Activated CD8-positive, alpha-beta T cell treated with anti-CD3 and anti-CD28 coated beads, Interleukin-2, amount 10 ng/mL, durations not matched to agents 7 days and 5 days (primary cell): ENCODE measurements at regions of chr12 and their contacts with region 1.

Region 1: DNA sequence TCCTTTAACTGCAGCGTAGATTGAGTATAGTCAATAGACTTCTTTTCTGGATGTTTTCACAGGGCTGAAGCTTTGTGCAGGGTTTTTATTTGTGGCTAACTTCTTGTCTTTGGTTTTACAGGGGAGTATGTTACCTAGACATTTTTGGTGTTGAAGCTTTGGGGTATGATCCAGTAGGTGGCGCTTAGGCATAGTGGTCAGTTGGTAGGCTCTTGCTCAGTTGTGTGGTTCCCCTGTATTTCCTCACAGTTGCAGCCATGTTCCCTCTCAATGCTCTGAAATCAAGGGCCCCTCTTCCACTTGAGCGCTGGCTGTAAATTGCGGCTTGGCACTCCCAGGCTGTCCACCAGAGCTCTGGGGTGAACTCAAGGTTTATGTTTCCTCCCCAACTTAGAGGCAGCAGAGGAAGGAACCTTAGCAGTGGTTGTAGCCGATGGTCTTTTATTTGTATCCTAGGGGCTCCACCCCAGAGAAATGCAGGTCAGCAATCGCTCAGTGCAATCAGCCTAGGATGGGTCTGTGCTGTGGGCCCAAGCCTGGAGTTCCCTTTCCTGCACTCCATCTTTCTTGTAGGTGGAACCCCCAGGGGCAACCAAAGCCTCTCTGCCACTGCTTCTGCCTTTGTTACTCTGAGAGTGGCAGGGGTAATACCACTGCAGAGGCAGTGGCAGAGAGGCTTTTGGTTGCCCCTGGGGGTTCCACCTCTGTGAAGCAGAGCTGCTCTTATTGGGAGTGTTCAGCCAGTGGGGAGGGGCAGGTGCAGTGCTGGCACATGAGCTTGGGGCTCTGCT is 55.1 kb downstream of the CMAS start:
- DNase-seq: peak; percentile 57
- ATAC-seq: peak; percentile 49
- H3K4me3 Mint-ChIP-seq: no peak overlapping the region
- H3K27ac Mint-ChIP-seq: no peak overlapping the region
- H3K4me1 Mint-ChIP-seq: peaks cover 13% of the 10 kb centered on the region
- H3K27me3 Mint-ChIP-seq: peaks cover 9% of the 10 kb centered on the region

Region 2: GRCh38 chr12:21221778-21222177 is 879.4 kb before region 1 on chr12:
- CTCF ChIA-PET with region 1: no interaction called
- POLR2A ChIA-PET with region 1: no interaction called
- DNase-seq: no peak
- ATAC-seq: no peak
- H3K4me3 Mint-ChIP-seq: no peak overlapping the region
- H3K27ac Mint-ChIP-seq: no peak overlapping the region
- H3K4me1 Mint-ChIP-seq: no peaks in the 10 kb centered on the region
- H3K27me3 Mint-ChIP-seq: no peaks in the 10 kb centered on the region

Region 3: GRCh38 chr12:21989819-21990412 is 111.2 kb before region 1 on chr12:
- CTCF ChIA-PET with region 1: no interaction called
- POLR2A ChIA-PET with region 1: no interaction called
- DNase-seq: no peak
- ATAC-seq: no peak
- H3K4me3 Mint-ChIP-seq: no peak overlapping the region
- H3K27ac Mint-ChIP-seq: no peak overlapping the region
- H3K4me1 Mint-ChIP-seq: peaks cover 8% of the 10 kb centered on the region
- H3K27me3 Mint-ChIP-seq: peaks cover 9% of the 10 kb centered on the region

Region 4: DNA sequence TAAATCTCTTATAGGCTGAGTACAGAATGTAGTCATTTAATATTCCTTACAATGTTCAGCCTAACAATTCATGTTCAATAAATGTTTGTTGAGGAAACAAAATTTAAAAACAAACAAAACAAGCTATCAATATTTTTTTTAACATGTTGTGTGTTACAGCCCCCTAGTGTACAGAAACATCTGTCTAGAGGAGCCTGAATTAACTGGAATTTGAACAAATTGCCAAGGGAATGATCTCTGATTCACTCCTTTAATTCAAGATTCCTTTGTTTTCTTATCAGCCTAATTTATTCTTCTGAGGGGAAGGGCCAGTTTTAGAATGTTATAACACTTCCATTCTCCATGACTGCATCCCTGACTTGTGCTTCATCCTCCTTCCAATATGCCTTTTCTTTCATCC is 72.0 kb after region 1 on chr12:
- CTCF ChIA-PET with region 1: interaction called, 26 read pairs
- POLR2A ChIA-PET with region 1: no interaction called
- DNase-seq: no peak
- ATAC-seq: no peak
- H3K4me3 Mint-ChIP-seq: no peak overlapping the region
- H3K27ac Mint-ChIP-seq: no peak overlapping the region
- H3K4me1 Mint-ChIP-seq: no peaks in the 10 kb centered on the region
- H3K27me3 Mint-ChIP-seq: no peaks in the 10 kb centered on the region

Region 5: DNA sequence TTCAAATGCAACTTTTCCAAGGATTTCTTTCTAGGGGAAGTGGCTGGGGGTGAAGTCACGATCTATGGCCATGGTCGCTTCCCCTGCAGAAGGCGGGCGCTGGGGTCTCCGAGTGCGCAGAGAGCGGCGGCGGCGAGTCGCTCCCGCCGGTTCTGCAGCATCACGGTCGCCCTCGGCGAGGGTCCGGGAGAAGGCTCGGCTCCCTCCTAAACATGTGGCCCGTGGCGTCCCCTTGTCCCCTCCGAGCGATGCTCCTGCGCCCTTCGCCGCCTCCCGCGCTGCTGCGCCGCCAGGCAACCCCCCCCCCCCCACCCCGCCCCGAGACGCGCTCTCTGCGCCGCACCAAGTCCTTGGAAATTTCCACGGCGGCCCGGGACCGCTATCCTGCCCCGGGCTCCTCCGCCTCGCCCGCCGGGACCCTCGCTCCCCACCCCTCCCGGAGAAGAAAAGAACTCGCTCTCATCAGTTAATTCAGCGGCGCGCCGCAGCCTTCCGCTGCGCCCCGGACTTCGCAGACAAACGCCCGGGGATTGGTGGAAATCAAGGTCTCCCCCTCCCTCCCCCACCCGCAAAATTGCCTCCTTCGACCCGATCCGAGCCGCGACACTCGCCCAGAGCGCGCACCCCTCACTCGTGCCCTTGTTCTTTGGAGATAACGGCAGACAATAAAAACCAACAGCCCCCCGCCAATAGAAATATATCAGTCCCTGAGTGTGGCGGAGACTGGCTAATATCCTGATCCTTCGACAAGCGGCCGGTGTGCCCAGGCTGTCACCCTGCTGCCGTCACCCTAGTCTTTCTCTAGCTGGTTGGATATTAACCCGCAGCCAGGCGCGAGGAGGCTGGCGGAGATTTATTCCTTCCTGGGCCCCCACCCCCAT is 233.5 kb after region 1 on chr12 and contains the start of gene ST8SIA1:
- CTCF ChIA-PET with region 1: interaction called, 11 read pairs
- POLR2A ChIA-PET with region 1: no interaction called
- DNase-seq: peak; percentile 51
- ATAC-seq: peak; percentile 39
- H3K4me3 Mint-ChIP-seq: peak within 1 kb of the TSS; percentile 84
- H3K27ac Mint-ChIP-seq: peak within 1 kb of the TSS; percentile 23
- H3K4me1 Mint-ChIP-seq: peaks cover 16% of the 10 kb centered on the region
- H3K27me3 Mint-ChIP-seq: peaks cover 56% of the 10 kb centered on the region
- total RNA-seq, gene ST8SIA1: 0.29 to 0.34 TPM

Region 6: DNA sequence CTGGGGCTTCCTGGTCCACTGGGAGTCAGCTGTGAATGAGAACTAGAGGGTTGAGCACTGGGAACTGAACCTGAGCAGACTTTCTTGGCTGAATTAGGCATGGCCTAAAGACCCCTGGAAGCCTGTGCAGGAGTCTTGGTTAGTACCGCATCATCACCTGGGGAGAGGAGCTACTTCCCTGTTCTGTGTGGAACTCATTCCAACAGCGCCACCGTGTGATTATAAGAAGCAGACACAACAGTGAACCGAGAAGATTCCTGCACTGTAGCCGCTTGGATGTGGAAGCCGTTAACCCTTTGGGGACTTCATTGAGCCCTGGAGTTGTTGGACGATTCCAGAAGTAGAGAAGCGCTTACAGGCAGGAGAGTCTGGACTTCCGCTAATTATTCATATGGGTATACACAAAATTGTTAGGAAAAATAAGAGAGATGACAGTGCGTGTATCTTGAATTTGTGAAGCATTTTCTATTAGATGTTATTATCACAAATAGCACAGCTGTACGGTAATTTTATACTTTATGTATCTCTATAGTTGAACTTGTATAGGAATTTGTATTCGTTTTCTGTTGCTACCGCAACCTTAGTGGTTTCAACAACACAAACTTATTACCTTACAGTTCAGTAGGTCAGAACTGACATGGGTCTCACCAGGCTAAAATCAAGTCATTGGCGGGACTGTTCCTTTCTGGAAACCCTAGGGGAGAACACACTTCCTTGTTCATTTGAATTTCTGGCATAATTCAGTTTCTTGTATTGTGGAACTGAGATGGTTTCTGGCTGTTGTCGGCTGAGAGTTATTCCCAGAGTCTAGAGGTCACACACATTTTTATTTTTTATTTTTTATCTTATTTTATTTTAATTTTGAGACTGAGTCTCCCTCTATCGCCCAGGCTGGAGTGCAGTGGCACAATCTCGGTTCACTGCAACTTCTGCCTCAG is 342.5 kb after region 1 on chr12:
- CTCF ChIA-PET with region 1: interaction called, 12 read pairs
- POLR2A ChIA-PET with region 1: no interaction called
- DNase-seq: peak; percentile 70
- ATAC-seq: peak; percentile 99
- H3K4me3 Mint-ChIP-seq: no peak overlapping the region
- H3K27ac Mint-ChIP-seq: no peak overlapping the region
- H3K4me1 Mint-ChIP-seq: no peaks in the 10 kb centered on the region
- H3K27me3 Mint-ChIP-seq: peaks cover 9% of the 10 kb centered on the region